ENCODE measurements at regions of chr12 and their contacts with region 1.

Region 1: DNA sequence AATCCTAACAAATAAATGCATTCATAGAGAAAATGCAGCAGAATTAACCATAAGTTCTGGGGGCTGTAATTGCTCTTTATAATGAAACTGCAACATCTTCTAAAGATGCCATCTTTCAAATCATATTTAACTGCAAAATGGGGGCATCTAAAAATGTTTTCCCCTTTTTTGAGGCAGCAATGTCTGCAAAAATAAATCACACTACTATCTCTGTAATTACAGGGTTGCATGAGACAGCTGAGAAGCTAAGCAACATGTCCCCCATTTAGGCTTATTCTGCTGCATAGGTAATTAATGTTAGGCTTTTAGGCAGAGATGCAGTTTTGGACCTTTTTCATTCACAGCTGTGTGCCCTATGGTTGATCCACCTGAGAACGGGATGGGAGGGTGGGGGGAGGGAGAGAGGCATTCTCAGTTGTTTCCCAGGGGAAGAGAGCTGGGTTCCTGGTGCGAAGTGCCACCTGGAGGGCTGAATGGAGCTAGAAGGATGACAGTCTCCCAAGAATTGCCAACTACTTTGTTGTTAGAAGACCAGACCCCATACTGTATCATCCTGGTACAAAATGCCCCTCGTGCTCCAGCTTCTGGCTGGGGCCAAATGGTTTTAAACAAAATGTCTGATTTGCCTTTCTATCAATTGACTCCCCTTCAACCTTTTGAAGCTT is 154.2 kb downstream of the APAF1 start:
- DNase-seq: no peak
- ATAC-seq: no peak
- H3K4me3 ChIP-seq: no peak overlapping the region
- H3K27ac ChIP-seq: no peak overlapping the region
- H3K4me1 ChIP-seq: no peaks in the 10 kb centered on the region
- H3K27me3 ChIP-seq: no peaks in the 10 kb centered on the region
- CTCF ChIP-seq: peak in 1 of 3 experiments; percentile 35; a peak in 1 of 6 replicates
- EP300 ChIP-seq: no peak
- POLR2A ChIP-seq: no peak
- RAD21 ChIP-seq: peak in 1 of 2 experiments; percentile 48; a peak in 2 of 4 replicates

Region 2: GRCh38 chr12:98073593-98073992 is 725.7 kb before region 1 on chr12:
- CTCF ChIA-PET with region 1: no interaction called
- POLR2A ChIA-PET with region 1: no interaction called
- in situ Hi-C with region 1: no loop called
- intact Hi-C with region 1: no loop called
- DNase-seq: no peak
- ATAC-seq: no peak
- H3K4me3 ChIP-seq: no peak overlapping the region
- H3K27ac ChIP-seq: no peak overlapping the region
- H3K4me1 ChIP-seq: no peaks in the 10 kb centered on the region
- H3K27me3 ChIP-seq: no peaks in the 10 kb centered on the region
- CTCF ChIP-seq: no peak
- EP300 ChIP-seq: no peak
- POLR2A ChIP-seq: no peak
- RAD21 ChIP-seq: no peak

Region 3: DNA sequence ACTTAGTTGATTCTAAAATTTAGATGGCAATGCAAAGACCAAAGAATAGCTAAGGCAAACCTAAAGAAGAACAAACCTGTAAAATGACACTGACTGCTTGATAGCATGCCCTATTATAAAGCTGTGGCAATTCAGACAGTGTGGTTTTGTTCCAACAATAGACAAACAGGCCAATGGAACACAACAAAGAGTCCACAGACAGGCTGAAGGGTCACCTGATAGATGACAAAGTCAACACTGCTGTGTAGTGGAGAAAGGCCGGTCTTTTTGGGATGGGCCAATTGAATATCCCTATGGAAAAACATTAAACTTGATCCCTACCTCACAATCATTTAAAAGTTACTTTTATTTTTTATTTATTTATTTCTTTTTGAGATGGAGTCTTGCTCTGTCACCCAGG is 239.6 kb before region 1 on chr12:
- CTCF ChIA-PET with region 1: no interaction called
- POLR2A ChIA-PET with region 1: no interaction called
- in situ Hi-C with region 1: no loop called
- intact Hi-C with region 1: loop called (anchors 10 kb)
- DNase-seq: no peak
- ATAC-seq: no peak
- H3K4me3 ChIP-seq: no peak overlapping the region
- H3K27ac ChIP-seq: no peak overlapping the region
- H3K4me1 ChIP-seq: no peaks in the 10 kb centered on the region
- H3K27me3 ChIP-seq: no peaks in the 10 kb centered on the region
- CTCF ChIP-seq: no peak
- EP300 ChIP-seq: no peak
- POLR2A ChIP-seq: no peak
- RAD21 ChIP-seq: no peak

Region 4: DNA sequence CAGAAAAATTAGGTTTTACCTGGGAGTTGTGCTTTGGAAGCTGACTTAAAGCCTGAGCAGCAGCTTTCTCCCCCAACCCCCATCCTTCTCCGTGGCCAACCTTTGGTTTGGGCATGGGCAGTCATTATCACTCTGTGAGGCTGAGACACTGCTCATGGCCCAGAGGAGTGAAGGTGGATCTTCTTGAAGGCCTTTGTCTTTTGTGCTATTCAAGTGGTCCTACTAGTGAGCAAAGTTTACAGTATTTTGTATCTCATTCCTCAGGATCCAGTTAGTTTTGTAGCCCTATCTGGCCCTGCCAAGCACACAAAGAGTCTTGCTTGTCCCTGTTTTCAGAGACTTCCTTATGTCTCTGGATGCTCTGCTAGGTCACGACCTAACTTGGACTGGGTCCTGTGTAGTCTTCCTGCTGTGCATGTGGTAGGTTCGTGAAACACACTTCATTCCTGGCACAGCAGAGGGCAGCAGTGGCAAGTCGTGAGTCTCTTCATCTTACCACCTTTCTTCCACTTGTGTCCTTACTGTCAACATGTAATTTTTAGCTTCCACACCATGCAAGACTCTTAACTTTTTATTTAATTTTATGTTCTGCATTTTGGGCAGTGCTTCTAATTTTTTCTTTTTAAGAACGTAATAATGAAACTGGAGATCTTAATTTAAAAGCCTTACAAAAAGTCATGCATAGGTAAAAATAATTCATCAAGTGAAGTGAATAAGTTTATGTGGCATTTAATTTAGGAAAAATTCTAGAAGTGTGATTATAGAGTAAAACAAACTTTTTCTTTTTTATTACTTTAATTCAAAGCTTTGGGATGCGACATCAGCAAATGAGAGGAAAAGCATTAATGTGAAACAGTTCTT is 100.4 kb before region 1 on chr12:
- CTCF ChIA-PET with region 1: no interaction called
- POLR2A ChIA-PET with region 1: no interaction called
- in situ Hi-C with region 1: no loop called
- intact Hi-C with region 1: loop called (anchors 5 kb)
- DNase-seq: peak; percentile 30 to 70 (median 44)
- ATAC-seq: peak; percentile 89
- H3K4me3 ChIP-seq: no peak overlapping the region
- H3K27ac ChIP-seq: no peak overlapping the region
- H3K4me1 ChIP-seq: peaks cover 4% of the 10 kb centered on the region in 2 experiments; a peak in 2 of 5 replicates
- H3K27me3 ChIP-seq: no peaks in the 10 kb centered on the region
- CTCF ChIP-seq: peak; percentile 67 to 77 (median 69)
- EP300 ChIP-seq: no peak
- POLR2A ChIP-seq: no peak
- RAD21 ChIP-seq: peak; percentile 30 to 76; a peak in 2 of 4 replicates